IMR-90 (cell line): ENCODE measurements at regions of chr11 and their contacts with region 1.

Region 1: GRCh38 chr11:6022956-6023355 is 7.6 kb downstream of the OR56A1 start:
- DNase-seq: peak; percentile 43
- ATAC-seq: peak; percentile 56
- H3K4me3 ChIP-seq: no peak overlapping the region
- H3K27ac ChIP-seq: no peak overlapping the region
- H3K4me1 ChIP-seq: no peaks in the 10 kb centered on the region
- H3K27me3 ChIP-seq: no peaks in the 10 kb centered on the region
- CTCF ChIP-seq: peak; percentile 58
- POLR2A ChIP-seq: no peak
- RAD21 ChIP-seq: peak; percentile 67

Region 2: DNA sequence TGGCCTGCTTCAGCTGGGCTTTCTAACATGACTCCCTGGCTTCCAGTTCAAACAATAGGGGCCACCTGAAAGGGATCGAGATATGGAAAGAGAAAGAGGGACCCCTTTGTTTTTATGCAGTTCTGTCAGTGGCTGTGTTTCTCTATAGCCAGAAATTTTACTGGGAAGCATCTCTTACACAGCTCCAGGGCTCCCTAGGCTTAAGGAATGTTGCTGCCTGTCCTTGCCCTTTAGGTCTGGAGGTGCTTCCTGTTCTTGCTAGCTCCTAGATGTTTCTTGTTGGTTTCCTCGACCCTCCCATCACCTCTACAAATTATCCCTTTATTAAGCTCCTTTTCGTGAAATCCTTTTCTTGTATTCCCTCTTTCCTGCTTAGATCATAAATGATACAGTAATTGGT is 29.4 kb after region 1 on chr11:
- CTCF ChIA-PET with region 1: no interaction called
- POLR2A ChIA-PET with region 1: no interaction called
- dilution Hi-C with region 1: no loop called
- in situ Hi-C with region 1: no loop called
- intact Hi-C with region 1: no loop called
- DNase-seq: no peak
- ATAC-seq: no peak
- H3K4me3 ChIP-seq: no peak overlapping the region
- H3K27ac ChIP-seq: no peak overlapping the region
- H3K4me1 ChIP-seq: no peaks in the 10 kb centered on the region
- H3K27me3 ChIP-seq: no peaks in the 10 kb centered on the region
- CTCF ChIP-seq: no peak
- POLR2A ChIP-seq: no peak
- RAD21 ChIP-seq: no peak

Region 3: DNA sequence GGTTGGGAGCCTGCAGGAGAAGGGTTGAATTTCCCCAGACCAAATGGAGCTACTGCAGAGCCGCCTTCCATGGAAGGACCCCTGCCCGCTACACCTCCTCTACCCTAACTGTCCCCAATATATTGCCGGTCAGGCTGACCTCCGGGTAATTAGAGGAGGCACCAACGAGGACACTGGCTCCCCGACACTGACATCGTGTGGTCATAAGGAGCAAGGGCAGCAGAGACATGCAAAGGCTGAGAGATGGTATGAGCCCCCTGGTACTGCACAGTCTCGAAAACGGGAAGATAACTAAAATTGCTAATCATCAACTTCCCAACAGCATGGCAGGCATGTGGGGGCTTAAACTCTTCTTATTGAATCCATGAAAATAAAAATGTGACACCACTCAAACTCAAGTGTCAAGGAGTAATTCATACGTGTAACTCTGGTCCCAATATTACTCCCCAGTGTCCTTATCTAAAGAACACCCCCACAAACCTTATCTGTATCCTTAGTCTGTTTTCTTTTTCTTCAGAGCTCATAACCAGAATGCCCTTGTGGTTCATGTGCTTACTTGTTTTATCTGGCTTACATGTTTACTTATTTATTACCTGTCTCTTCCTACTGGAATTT is 293.0 kb after region 1 on chr11:
- CTCF ChIA-PET with region 1: no interaction called
- POLR2A ChIA-PET with region 1: no interaction called
- dilution Hi-C with region 1: no loop called
- in situ Hi-C with region 1: no loop called
- intact Hi-C with region 1: loop called (anchors 1 kb)
- DNase-seq: peak; percentile 65
- ATAC-seq: peak; percentile 32
- H3K4me3 ChIP-seq: no peak overlapping the region
- H3K27ac ChIP-seq: no peak overlapping the region
- H3K4me1 ChIP-seq: peaks cover 7% of the 10 kb centered on the region
- H3K27me3 ChIP-seq: no peaks in the 10 kb centered on the region
- CTCF ChIP-seq: peak; percentile 84
- POLR2A ChIP-seq: peak; percentile 30; the same call in 1 of the 2 replicates
- RAD21 ChIP-seq: peak; percentile 85